Heart right ventricle (tissue), 16 donors: ENCODE measurements at regions of chr4 and their contacts with region 1.

Region 1: GRCh38 chr4:46980851-46981250 is 12.5 kb downstream of the GABRA4 start:
- DNase-seq: no peak
- ATAC-seq: no peak
- H3K4me3 ChIP-seq: no peak overlapping the region
- H3K27ac ChIP-seq: no peak overlapping the region
- H3K4me1 ChIP-seq: peaks cover 0 to 2% (median 0%) of the 10 kb centered on the region in 9 donors
- H3K27me3 ChIP-seq: no peaks in the 10 kb centered on the region
- CTCF ChIP-seq: no peak

Region 2: DNA sequence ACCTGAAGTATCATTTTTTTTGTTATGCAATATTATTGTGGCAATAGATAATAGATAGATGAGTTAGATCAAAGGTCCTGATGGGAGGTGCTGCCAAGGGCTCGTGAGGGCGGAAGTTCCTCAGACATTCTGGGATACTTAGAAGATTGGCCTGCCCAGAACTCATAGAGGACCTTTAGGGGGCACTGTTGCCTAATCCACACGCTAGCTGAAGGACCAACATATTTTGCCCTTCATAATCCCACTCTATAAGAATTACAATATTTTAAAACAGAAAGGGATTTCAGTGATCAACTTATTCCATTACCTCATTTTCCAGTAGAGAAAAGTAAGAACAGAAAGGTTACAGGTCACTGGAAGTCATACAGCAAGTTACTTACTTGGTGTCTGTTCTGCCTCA is 48.9 kb before region 1 on chr4:
- intact Hi-C with region 1: no loop called
- DNase-seq: peak in 1 of 2 donors; percentile 32
- ATAC-seq: peak in 6 of 8 donors; percentile 69 to 85 (median 78)
- H3K4me3 ChIP-seq: no peak overlapping the region
- H3K27ac ChIP-seq: peak overlapping the region in 2 of 10 donors; percentile 10 to 22
- H3K4me1 ChIP-seq: peaks cover 0 to 12% (median 0%) of the 10 kb centered on the region in 9 donors
- H3K27me3 ChIP-seq: no peaks in the 10 kb centered on the region
- CTCF ChIP-seq: peak; percentile 22 to 70 (median 54)

Region 3: DNA sequence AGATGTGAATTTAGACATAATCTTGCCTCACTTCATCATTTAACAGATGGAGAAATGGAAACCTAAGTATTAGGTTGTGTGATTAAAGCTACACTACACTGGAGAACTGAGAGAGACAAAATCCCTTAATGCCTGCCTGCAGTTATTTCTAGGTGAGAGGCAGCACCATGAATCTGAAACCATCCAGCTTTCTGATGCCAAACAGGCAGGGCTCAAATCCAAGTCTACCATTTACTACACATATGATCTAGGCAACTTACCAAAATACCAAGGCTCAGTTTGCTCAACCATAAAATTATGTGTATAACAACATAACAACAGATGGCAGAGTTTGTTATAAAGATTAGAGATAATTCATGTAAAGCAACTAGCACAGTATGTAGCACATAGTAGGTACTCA is 26.2 kb before region 1 on chr4:
- intact Hi-C with region 1: loop called in 1 of 10 experiments (anchors 1 kb)
- DNase-seq: no peak
- ATAC-seq: peak in 2 of 8 donors; percentile 25 to 37
- H3K4me3 ChIP-seq: no peak overlapping the region
- H3K27ac ChIP-seq: no peak overlapping the region
- H3K4me1 ChIP-seq: peaks cover 0 to 26% (median 0%) of the 10 kb centered on the region in 9 donors
- H3K27me3 ChIP-seq: no peaks in the 10 kb centered on the region
- CTCF ChIP-seq: no peak

Region 4: GRCh38 chr4:47032415-47033106 is 51.7 kb after region 1 on chr4:
- intact Hi-C with region 1: no loop called
- DNase-seq: peak; percentile 59 to 60
- ATAC-seq: peak; percentile 83 to 98 (median 96)
- H3K4me3 ChIP-seq: peak overlapping the region; percentile 9 to 60 (median 53)
- H3K27ac ChIP-seq: peak overlapping the region in 6 of 10 donors; percentile 5 to 80 (median 75)
- H3K4me1 ChIP-seq: peaks cover 0 to 15% (median 0%) of the 10 kb centered on the region in 9 donors
- H3K27me3 ChIP-seq: peaks cover 0 to 59% (median 15%) of the 10 kb centered on the region in 7 donors
- CTCF ChIP-seq: peak; percentile 39 to 77 (median 71)